Caco-2 (cell line): ENCODE measurements at regions of chr1 and their contacts with region 1.

Region 1: GRCh38 chr1:93909146-93910050 is at the start of gene GCLM:
- DNase-seq: peak; percentile 86 to 91
- H3K4me3 ChIP-seq: peak within 1 kb of the TSS; percentile 40
- H3K4me3 Mint-ChIP-seq: peak within 1 kb of the TSS; percentile 82
- H3K27ac Mint-ChIP-seq: peak within 1 kb of the TSS; percentile 22
- H3K4me1 ChIP-seq: no peaks in the 10 kb centered on the region
- H3K4me1 Mint-ChIP-seq: no peaks in the 10 kb centered on the region
- H3K27me3 ChIP-seq: no peaks in the 10 kb centered on the region
- H3K27me3 Mint-ChIP-seq: peaks cover 9% of the 10 kb centered on the region
- CTCF ChIP-seq: peak; percentile 59 to 76
- total RNA-seq, gene GCLM: 11.7 and 11.8 TPM in 2 replicates

Region 2: GRCh38 chr1:93827633-93828366 is 81.6 kb before region 1 on chr1:
- CTCF ChIA-PET with region 1: no interaction called
- POLR2A ChIA-PET with region 1: no interaction called
- intact Hi-C with region 1: no loop called
- DNase-seq: peak; percentile 30 to 41
- H3K4me3 ChIP-seq: no peak overlapping the region
- H3K4me3 Mint-ChIP-seq: peak overlapping the region; percentile 52
- H3K27ac Mint-ChIP-seq: peak overlapping the region; percentile 35
- H3K4me1 ChIP-seq: peaks cover 16% of the 10 kb centered on the region
- H3K4me1 Mint-ChIP-seq: peaks cover 18% of the 10 kb centered on the region
- H3K27me3 ChIP-seq: no peaks in the 10 kb centered on the region
- H3K27me3 Mint-ChIP-seq: no peaks in the 10 kb centered on the region
- CTCF ChIP-seq: no peak

Region 3: GRCh38 chr1:93878889-93879586 is 30.4 kb before region 1 on chr1 and contains the start of gene DNTTIP2:
- CTCF ChIA-PET with region 1: interaction called, 3 read pairs
- POLR2A ChIA-PET with region 1: interaction called, 6 read pairs
- intact Hi-C with region 1: loop called (anchors 2 kb)
- DNase-seq: peak; percentile 85 to 87
- H3K4me3 ChIP-seq: peak within 1 kb of the TSS; percentile 78
- H3K4me3 Mint-ChIP-seq: peak within 1 kb of the TSS; percentile 90
- H3K27ac Mint-ChIP-seq: peak within 1 kb of the TSS; percentile 99
- H3K4me1 ChIP-seq: no peaks in the 10 kb centered on the region
- H3K4me1 Mint-ChIP-seq: peaks cover 17% of the 10 kb centered on the region
- H3K27me3 ChIP-seq: no peaks in the 10 kb centered on the region
- H3K27me3 Mint-ChIP-seq: no peaks in the 10 kb centered on the region
- CTCF ChIP-seq: no peak
- total RNA-seq, gene DNTTIP2: 39.0 and 39.9 TPM in 2 replicates

Region 4: DNA sequence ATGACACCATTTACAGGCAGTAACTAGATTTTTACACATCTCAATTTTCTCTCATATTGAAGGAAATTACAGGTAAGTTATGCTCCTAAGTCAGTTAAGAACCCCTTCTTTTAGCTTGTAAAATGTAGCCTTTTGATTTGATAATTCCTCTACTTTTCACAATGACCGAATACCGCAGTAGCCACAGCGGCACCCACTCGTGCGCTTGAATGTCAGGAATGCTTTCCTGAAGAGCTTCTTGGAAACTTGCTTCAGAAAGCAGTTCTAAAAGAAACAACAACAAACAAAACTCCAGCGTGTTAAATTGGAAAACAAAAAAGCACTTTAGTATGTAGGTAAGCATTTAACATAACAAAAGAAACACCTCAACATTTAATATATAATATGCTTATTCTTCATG is 20.5 kb before region 1 on chr1:
- CTCF ChIA-PET with region 1: no interaction called
- POLR2A ChIA-PET with region 1: no interaction called
- intact Hi-C with region 1: loop called (anchors 2 kb)
- DNase-seq: no peak
- H3K4me3 ChIP-seq: no peak overlapping the region
- H3K4me3 Mint-ChIP-seq: no peak overlapping the region
- H3K27ac Mint-ChIP-seq: no peak overlapping the region
- H3K4me1 ChIP-seq: no peaks in the 10 kb centered on the region
- H3K4me1 Mint-ChIP-seq: peaks cover 6% of the 10 kb centered on the region
- H3K27me3 ChIP-seq: no peaks in the 10 kb centered on the region
- H3K27me3 Mint-ChIP-seq: no peaks in the 10 kb centered on the region
- CTCF ChIP-seq: no peak

Region 5: GRCh38 chr1:94130851-94131595 is 221.6 kb after region 1 on chr1:
- CTCF ChIA-PET with region 1: no interaction called
- POLR2A ChIA-PET with region 1: no interaction called
- intact Hi-C with region 1: no loop called
- DNase-seq: no peak
- H3K4me3 ChIP-seq: no peak overlapping the region
- H3K4me3 Mint-ChIP-seq: no peak overlapping the region
- H3K27ac Mint-ChIP-seq: no peak overlapping the region
- H3K4me1 ChIP-seq: peaks cover 12% of the 10 kb centered on the region
- H3K4me1 Mint-ChIP-seq: peaks cover 11% of the 10 kb centered on the region
- H3K27me3 ChIP-seq: no peaks in the 10 kb centered on the region
- H3K27me3 Mint-ChIP-seq: no peaks in the 10 kb centered on the region
- CTCF ChIP-seq: no peak